OCI-LY7 (cell line): ENCODE measurements at regions of chr4 and their contacts with region 1.

Region 1: GRCh38 chr4:1130316-1131186 is 17.2 kb upstream of the RNF212 start:
- DNase-seq: peak; percentile 82
- H3K4me3 ChIP-seq: no peak overlapping the region
- H3K27ac ChIP-seq: no peak overlapping the region
- H3K4me1 ChIP-seq: no peaks in the 10 kb centered on the region
- CTCF ChIP-seq: peak; percentile 100

Region 2: GRCh38 chr4:825238-825835 is 305.2 kb before region 1 on chr4:
- CTCF ChIA-PET with region 1: no interaction called
- POLR2A ChIA-PET with region 1: no interaction called
- intact Hi-C with region 1: no loop called
- DNase-seq: no peak
- H3K4me3 ChIP-seq: peak overlapping the region; percentile 60
- H3K27ac ChIP-seq: no peak overlapping the region
- H3K4me1 ChIP-seq: no peaks in the 10 kb centered on the region
- CTCF ChIP-seq: no peak

Region 3: GRCh38 chr4:1082215-1083182 is 48.1 kb before region 1 on chr4:
- CTCF ChIA-PET with region 1: no interaction called
- POLR2A ChIA-PET with region 1: no interaction called
- intact Hi-C with region 1: no loop called
- DNase-seq: no peak
- H3K4me3 ChIP-seq: no peak overlapping the region
- H3K27ac ChIP-seq: no peak overlapping the region
- H3K4me1 ChIP-seq: no peaks in the 10 kb centered on the region
- CTCF ChIP-seq: no peak

Region 4: DNA sequence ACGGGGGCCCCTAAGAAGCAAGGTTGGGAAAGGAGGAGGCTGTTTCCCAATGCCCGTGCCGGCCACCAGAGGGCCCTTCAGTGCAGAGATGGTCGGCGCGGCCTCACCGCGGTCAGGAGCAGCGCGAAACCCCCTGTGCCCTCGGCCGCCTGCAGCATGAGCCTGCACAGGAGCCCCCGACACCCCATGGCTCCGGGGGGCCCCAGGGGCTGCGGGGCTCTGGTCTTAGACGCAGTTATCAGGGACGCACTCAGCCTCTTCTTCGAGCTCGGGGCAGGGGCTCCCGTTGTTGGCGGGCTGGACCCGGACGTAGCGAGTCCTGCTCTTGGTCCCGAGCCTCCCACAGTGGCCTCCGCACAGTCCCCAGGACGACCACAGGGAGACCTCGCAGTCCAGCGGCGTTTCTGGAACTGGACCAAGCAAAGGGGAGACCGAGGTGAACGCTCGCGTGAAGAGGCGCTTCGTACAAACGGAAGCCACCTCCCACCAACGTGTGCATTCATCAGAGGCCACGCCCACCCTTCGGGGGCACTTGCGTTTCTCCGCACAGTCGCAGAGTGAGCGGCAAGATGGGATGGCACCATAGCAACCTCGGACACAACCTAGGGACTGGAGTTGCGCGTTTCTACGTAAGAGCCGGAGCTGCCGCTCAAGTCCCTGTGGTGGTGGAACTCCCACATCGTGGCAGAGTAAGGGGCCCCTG is 36.8 kb after region 1 on chr4:
- CTCF ChIA-PET with region 1: no interaction called
- POLR2A ChIA-PET with region 1: no interaction called
- intact Hi-C with region 1: loop called (anchors 2 kb)
- DNase-seq: peak; percentile 97
- H3K4me3 ChIP-seq: peak overlapping the region; percentile 75
- H3K27ac ChIP-seq: peak overlapping the region; percentile 54
- H3K4me1 ChIP-seq: peaks cover 18% of the 10 kb centered on the region
- CTCF ChIP-seq: peak; percentile 92

Region 5: GRCh38 chr4:1192091-1192492 is 61.5 kb after region 1 on chr4:
- CTCF ChIA-PET with region 1: no interaction called
- POLR2A ChIA-PET with region 1: no interaction called
- intact Hi-C with region 1: no loop called
- DNase-seq: no peak
- H3K4me3 ChIP-seq: no peak overlapping the region
- H3K27ac ChIP-seq: no peak overlapping the region
- H3K4me1 ChIP-seq: peaks cover 7% of the 10 kb centered on the region
- CTCF ChIP-seq: no peak

Region 6: GRCh38 chr4:1218634-1219565 is 88.3 kb after region 1 on chr4:
- CTCF ChIA-PET with region 1: no interaction called
- POLR2A ChIA-PET with region 1: no interaction called
- intact Hi-C with region 1: loop called (anchors 2 kb)
- DNase-seq: peak; percentile 86
- H3K4me3 ChIP-seq: peak overlapping the region; percentile 62
- H3K27ac ChIP-seq: peak overlapping the region; percentile 99
- H3K4me1 ChIP-seq: peaks cover 77% of the 10 kb centered on the region
- CTCF ChIP-seq: no peak

Region 7: DNA sequence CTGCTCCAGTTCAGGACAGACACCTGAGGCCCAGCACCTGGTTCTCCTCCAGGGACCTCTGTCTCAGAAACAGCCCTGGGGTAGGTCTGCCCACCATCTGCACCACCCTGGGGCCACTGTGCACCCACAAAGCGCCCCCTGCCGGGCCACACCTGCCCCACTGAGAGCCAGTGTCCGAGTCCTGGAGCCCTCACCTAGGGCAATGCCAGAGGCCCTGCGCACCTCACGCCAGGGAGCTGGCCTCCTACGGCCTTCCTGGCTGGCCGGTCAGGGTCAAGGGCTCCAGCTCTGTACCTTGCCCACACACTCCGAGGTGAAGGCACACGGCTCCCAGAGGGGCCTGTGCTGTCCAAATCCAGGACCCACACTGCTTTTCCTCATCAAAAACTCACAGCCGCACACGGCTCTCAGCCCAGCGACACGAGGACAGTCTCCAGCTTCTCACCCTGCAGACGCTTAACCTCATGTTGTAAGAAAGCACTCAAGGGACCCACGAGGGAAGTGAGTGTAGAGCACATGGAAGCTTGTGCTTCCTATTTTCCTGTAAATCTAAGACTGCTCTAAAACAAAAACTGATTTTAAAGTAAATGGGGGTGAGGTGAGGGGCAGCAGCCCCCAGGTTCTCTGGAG is 113.0 kb after region 1 on chr4:
- CTCF ChIA-PET with region 1: no interaction called
- POLR2A ChIA-PET with region 1: no interaction called
- intact Hi-C with region 1: loop called (anchors 1 kb)
- DNase-seq: peak; percentile 51
- H3K4me3 ChIP-seq: no peak overlapping the region
- H3K27ac ChIP-seq: no peak overlapping the region
- H3K4me1 ChIP-seq: peaks cover 16% of the 10 kb centered on the region
- CTCF ChIP-seq: peak; percentile 74

Region 8: DNA sequence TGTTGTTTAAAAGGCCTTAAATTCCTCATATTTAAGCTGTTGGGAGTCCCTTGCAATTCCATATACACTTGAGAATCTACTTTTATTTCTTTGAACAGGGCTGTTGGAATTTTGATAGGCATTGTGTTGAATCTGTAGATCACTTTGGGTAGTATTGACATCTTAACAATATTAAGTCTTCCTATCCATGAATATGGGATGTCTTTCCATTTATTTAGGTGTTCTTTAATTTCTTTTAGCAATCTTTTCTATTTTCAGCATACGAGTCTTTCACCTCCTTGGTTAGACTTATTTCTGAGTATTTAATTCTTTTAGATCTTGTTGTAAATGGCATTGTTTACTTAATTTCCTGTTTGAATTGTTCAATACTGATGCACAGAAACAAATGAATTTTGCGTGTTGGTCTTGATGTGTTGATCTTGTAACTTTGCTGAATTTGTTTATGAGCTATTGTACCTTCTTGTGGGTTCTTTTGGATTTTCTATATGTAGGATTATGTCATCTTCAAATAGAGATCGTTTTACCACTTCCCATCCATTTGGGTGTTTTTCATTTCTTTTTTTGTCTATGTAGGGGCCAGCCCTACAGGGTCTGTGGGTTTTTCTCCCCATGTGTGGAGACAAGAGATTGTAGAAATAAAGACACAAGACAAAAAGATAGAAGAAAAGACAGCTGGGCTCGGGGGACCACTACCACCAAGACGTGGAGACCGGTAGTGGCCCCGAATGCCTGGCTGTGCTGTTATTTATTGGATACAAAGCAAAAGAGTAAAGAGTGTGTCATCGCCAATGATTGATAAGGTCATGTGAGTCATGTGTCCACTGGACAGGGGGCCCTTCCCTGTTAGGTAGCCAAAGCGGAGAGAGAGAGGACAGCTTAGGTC is 136.6 kb after region 1 on chr4:
- CTCF ChIA-PET with region 1: no interaction called
- POLR2A ChIA-PET with region 1: interaction called, 3 read pairs
- intact Hi-C with region 1: loop called (anchors 1 kb)
- DNase-seq: no peak
- H3K4me3 ChIP-seq: peak overlapping the region; percentile 61
- H3K27ac ChIP-seq: peak overlapping the region; percentile 68
- H3K4me1 ChIP-seq: peaks cover 14% of the 10 kb centered on the region
- CTCF ChIP-seq: no peak

Region 9: DNA sequence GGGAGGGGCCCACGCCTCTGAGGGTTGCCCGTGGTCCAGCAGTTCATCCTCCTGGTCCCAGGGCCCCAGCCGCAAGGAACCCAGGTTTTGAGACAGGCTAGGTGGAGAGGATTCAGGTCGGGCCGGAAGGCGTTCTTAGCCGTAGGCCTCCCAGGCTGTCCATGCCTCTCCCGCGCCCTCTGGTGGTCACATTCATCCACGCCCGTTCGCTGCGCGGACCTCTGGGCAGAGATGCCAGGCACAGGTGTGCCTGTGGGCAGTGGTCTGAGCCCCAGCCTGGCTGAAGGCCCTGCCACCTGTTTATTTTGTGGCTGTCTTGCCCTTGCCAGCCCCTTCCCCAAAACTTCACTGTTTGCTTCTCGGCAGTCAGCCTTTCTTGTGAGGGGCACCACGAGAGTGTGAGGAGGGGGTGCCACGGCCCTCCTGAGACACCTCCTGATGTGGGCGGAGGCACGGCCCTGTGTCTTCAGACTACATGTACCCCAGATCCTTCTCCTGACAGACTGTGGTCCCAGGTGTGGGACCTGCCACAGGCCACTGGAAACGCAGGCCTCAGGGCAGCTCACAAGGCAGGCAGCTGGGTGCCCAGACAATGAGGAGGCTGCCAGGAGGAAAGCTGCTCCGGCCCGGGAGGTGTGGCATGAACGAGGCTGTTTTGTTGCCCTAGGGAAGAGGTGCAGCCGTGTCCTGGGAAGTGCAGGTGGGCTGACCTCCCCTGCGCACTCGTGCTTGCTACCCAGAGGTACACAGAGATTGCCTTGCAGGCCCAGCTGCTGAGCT is 221.5 kb after region 1 on chr4:
- CTCF ChIA-PET with region 1: no interaction called
- POLR2A ChIA-PET with region 1: no interaction called
- intact Hi-C with region 1: loop called (anchors 1 kb)
- DNase-seq: peak; percentile 79
- H3K4me3 ChIP-seq: no peak overlapping the region
- H3K27ac ChIP-seq: no peak overlapping the region
- H3K4me1 ChIP-seq: peaks cover 16% of the 10 kb centered on the region
- CTCF ChIP-seq: peak; percentile 88

Region 10: GRCh38 chr4:1519787-1520661 is 389.5 kb after region 1 on chr4:
- CTCF ChIA-PET with region 1: no interaction called
- POLR2A ChIA-PET with region 1: no interaction called
- intact Hi-C with region 1: no loop called
- DNase-seq: no peak
- H3K4me3 ChIP-seq: no peak overlapping the region
- H3K27ac ChIP-seq: no peak overlapping the region
- H3K4me1 ChIP-seq: no peaks in the 10 kb centered on the region
- CTCF ChIP-seq: no peak

Region 11: DNA sequence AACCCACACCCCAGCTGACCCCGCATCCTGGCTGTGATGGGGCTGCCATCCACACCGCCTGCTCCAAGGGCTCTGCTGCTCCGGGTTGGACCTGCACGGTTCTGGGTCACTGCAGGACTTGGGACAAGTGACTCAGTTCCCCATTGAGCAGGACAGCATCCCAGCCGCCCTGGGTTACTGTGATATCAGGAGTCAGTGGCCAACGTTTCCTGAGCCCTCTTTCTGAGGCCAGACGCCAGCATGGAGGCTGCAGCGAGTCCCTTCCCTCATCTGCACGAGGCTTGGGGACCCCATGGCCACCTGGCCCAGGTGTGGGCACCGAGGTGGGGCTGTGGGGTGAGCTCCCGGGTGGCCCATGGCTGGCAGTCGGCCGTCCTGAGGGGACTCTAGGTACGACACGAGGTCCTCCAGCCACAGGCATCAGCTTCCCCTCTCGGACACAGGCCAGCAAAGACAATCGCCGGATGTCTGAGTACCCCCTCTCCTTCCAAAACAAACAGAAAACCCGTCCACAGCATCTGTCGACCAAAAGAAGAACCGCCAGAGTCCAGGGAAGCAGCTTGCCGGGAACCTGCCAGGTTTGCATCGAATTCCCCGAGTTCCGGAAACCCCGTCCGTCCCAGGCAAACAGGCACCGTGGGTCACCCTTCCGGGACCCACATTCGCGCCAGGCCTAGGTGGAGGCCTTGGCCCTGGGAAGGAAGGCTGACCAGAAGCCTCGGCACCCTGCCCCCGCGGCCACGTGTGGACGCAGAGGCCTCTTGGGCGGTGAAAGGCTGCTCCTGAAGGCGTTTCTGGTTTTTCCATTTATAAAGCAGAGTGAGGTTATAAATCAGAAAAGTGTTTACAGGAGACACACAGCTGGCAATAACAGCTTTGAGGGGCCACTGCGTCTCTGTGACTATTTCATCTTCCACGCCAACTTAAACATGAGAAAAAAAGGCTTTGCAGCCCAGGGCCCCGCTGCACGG is 417.6 kb after region 1 on chr4:
- CTCF ChIA-PET with region 1: no interaction called
- POLR2A ChIA-PET with region 1: no interaction called
- intact Hi-C with region 1: loop called (anchors 10 kb)
- DNase-seq: no peak
- H3K4me3 ChIP-seq: no peak overlapping the region
- H3K27ac ChIP-seq: no peak overlapping the region
- H3K4me1 ChIP-seq: no peaks in the 10 kb centered on the region
- CTCF ChIP-seq: no peak